ENCODE measurements at regions of chr5 and their contacts with region 1.

Region 1: DNA sequence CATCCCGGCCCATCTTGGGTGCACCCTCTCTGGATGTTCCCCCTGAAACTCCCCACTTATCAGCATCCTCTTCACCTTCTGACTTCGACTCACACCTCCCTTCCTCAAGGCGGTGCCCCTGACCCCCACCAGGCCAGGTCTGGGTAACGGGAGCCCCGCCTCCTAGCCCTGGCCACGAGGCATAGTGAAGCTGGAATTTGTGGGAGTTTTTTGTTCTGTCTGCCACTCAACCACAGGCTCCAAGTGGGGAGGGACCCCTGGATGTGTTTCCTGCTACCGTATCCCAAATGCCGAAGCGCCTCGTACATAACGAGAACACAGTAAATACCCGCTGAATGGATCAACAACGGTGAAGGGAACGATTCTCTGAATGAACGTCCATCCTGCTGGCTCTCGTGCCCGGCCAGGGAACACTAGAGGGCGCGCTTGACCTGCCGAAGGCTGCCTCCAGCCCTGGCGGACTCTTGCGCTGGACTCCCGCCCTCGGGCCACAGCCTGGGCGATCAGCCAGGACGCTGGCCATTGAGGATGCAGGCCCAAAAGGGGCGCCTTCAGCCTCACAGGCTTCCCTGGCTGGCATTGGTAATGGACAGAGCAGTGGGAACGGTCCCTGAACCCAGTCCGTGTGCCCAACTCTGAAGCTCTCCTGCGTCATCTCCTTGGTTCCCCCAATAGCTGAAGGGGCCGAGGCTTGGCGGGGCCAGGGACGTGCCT is 47.3 kb upstream of the PHYKPL start:
- DNase-seq: peak; percentile 87 to 95 (median 94)
- H3K4me3 ChIP-seq: peak overlapping the region in 32 of 59 donors; percentile 2 to 51 (median 26)
- H3K27ac ChIP-seq: peak overlapping the region in 5 of 59 donors; percentile 4 to 48 (median 37)
- H3K27me3 ChIP-seq: peaks cover 0 to 5% (median 0%) of the 10 kb centered on the region in 45 donors
- CTCF ChIP-seq: peak; percentile 66 to 99 (median 96)

Region 2: GRCh38 chr5:178196986-178197385 is 82.9 kb before region 1 on chr5:
- intact Hi-C with region 1: no loop called
- DNase-seq: no peak
- H3K4me3 ChIP-seq: no peak overlapping the region
- H3K27ac ChIP-seq: no peak overlapping the region
- H3K27me3 ChIP-seq: peaks cover 0 to 5% (median 0%) of the 10 kb centered on the region in 45 donors
- CTCF ChIP-seq: peak in 7 of 56 donors; percentile 8 to 26 (median 16)

Region 3: GRCh38 chr5:178331399-178331996 is 51.6 kb after region 1 on chr5:
- intact Hi-C with region 1: loop called in 1 of 2 experiments (anchors 2 kb)
- DNase-seq: peak; percentile 52 to 93 (median 90)
- H3K4me3 ChIP-seq: peak overlapping the region in 3 of 59 donors; percentile 3 to 20 (median 18)
- H3K27ac ChIP-seq: peak overlapping the region in 58 of 59 donors; percentile 74 to 99 (median 94)
- H3K27me3 ChIP-seq: no peaks in the 10 kb centered on the region
- CTCF ChIP-seq: peak in 14 of 56 donors; percentile 9 to 36 (median 18)

Region 4: GRCh38 chr5:178453224-178453623 is 173.3 kb after region 1 on chr5:
- intact Hi-C with region 1: loop called in 1 of 2 experiments (anchors 10 kb)
- DNase-seq: no peak
- H3K4me3 ChIP-seq: no peak overlapping the region
- H3K27ac ChIP-seq: no peak overlapping the region
- H3K27me3 ChIP-seq: peaks cover 0 to 3% (median 0%) of the 10 kb centered on the region in 45 donors
- CTCF ChIP-seq: no peak

Region 5: DNA sequence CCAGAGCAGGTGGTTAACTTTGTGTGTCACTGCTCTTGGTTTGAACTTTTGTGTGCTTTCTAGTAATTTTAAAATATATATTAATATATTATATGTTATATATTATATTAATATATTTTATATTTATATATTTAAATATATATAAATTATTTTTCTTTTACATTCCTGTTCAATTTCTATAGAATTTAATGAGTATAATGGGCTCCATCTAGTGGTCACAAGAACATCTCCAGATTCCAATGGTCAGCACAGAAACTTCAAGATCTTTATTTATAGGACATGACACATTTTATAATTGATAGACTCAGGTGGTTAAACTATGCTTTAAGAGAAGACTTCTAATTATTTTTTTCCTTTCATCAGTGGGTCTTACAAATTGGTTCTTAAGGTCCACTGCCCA is 271.2 kb after region 1 on chr5:
- intact Hi-C with region 1: loop called (anchors 1 to 2 kb)
- DNase-seq: no peak
- H3K4me3 ChIP-seq: no peak overlapping the region
- H3K27ac ChIP-seq: no peak overlapping the region
- H3K27me3 ChIP-seq: no peaks in the 10 kb centered on the region
- CTCF ChIP-seq: peak in 55 of 56 donors; percentile 25 to 79 (median 62)

Region 6: DNA sequence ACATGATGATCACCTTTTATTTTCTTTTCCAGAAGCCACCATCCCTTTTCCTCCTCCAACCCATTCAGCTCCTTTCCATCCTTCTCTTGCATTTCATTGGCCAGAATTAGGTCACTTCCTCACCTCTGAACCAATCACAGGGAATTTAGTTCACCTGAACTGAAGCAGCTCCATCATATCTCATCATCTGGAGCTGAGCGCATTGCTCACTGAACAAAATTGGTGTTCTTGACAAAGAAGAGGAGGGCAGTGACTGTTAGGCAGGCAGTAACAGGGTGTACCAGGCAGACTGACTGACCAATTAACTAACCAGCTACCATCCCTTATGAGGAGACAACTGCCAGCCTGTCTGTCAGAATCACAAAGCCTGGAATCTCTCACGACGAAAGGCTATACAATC is 452.4 kb after region 1 on chr5:
- intact Hi-C with region 1: loop called in 1 of 2 experiments (anchors 2 kb)
- DNase-seq: no peak
- H3K4me3 ChIP-seq: no peak overlapping the region
- H3K27ac ChIP-seq: peak overlapping the region in 22 of 59 donors; percentile 1 to 59 (median 36)
- H3K27me3 ChIP-seq: no peaks in the 10 kb centered on the region
- CTCF ChIP-seq: no peak